Heart right ventricle (tissue), 16 donors: ENCODE measurements at regions of chr7 and their contacts with region 1.

Region 1: GRCh38 chr7:130242198-130243014 is 24.3 kb upstream of the CPA2 start:
- DNase-seq: peak; percentile 49 to 63
- ATAC-seq: peak in 6 of 8 donors; percentile 65 to 81 (median 79)
- H3K4me3 ChIP-seq: no peak overlapping the region
- H3K27ac ChIP-seq: no peak overlapping the region
- H3K4me1 ChIP-seq: peaks cover 0 to 13% (median 0%) of the 10 kb centered on the region in 9 donors
- H3K27me3 ChIP-seq: no peaks in the 10 kb centered on the region
- CTCF ChIP-seq: peak; percentile 53 to 91 (median 80)

Region 2: GRCh38 chr7:130721486-130722280 is 479.3 kb after region 1 on chr7:
- intact Hi-C with region 1: loop called in 6 of 10 experiments (anchors 2 to 10 kb)
- DNase-seq: peak; percentile 70 to 82
- ATAC-seq: peak; percentile 93 to 98 (median 96)
- H3K4me3 ChIP-seq: no peak overlapping the region
- H3K27ac ChIP-seq: no peak overlapping the region
- H3K4me1 ChIP-seq: peaks cover 0 to 6% (median 0%) of the 10 kb centered on the region in 9 donors
- H3K27me3 ChIP-seq: peaks cover 0 to 28% (median 3%) of the 10 kb centered on the region in 7 donors
- CTCF ChIP-seq: peak; percentile 36 to 84 (median 73)

Region 3: GRCh38 chr7:130831817-130832481 is 589.5 kb after region 1 on chr7:
- intact Hi-C with region 1: loop called in 1 of 10 experiments (anchors 5 kb)
- DNase-seq: no peak
- ATAC-seq: no peak
- H3K4me3 ChIP-seq: no peak overlapping the region
- H3K27ac ChIP-seq: no peak overlapping the region
- H3K4me1 ChIP-seq: no peaks in the 10 kb centered on the region
- H3K27me3 ChIP-seq: no peaks in the 10 kb centered on the region
- CTCF ChIP-seq: peak; percentile 49 to 82 (median 76)